Right lobe of liver (tissue), 6 donors: ENCODE measurements at regions of chr11 and their contacts with region 1.

Region 1: DNA sequence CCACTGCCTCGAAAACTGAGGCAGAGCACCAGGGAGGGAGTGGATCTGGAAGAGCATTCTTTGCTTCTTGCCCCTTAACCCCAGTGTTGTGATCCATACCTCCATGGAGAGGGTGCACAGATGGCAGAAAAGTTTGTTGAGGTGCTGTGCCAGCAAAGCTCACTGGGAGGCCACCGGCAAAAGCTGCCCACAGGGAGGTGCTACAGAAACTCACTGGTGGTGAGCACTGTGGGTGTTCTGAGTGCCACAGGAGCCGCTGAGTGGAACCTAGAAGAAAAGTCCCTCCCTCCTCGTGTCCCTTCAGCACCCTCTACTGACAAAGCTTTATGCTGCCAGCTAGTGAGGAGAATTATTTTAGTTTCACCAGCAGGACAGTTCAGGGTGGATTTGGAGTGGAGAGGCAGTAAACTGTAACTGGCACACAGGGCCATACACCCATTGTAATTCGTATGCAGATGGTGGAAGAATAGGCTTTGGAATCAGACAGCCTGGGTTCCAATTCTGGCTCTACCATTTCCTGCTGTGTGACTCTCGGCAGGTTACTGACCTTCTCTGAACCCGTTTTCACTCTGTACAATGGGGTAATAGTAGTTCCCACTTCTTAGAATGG is 84.6 kb downstream of the SWAP70 start:
- DNase-seq: peak in 1 of 3 donors; percentile 56
- ATAC-seq: peak; percentile 96 to 98 (median 97)
- H3K4me3 ChIP-seq: no peak overlapping the region
- H3K27ac ChIP-seq: no peak overlapping the region
- H3K4me1 ChIP-seq: no peaks in the 10 kb centered on the region
- H3K27me3 ChIP-seq: no peaks in the 10 kb centered on the region
- CTCF ChIP-seq: peak; percentile 62 to 77 (median 72)
- POLR2A ChIP-seq: no peak

Region 2: DNA sequence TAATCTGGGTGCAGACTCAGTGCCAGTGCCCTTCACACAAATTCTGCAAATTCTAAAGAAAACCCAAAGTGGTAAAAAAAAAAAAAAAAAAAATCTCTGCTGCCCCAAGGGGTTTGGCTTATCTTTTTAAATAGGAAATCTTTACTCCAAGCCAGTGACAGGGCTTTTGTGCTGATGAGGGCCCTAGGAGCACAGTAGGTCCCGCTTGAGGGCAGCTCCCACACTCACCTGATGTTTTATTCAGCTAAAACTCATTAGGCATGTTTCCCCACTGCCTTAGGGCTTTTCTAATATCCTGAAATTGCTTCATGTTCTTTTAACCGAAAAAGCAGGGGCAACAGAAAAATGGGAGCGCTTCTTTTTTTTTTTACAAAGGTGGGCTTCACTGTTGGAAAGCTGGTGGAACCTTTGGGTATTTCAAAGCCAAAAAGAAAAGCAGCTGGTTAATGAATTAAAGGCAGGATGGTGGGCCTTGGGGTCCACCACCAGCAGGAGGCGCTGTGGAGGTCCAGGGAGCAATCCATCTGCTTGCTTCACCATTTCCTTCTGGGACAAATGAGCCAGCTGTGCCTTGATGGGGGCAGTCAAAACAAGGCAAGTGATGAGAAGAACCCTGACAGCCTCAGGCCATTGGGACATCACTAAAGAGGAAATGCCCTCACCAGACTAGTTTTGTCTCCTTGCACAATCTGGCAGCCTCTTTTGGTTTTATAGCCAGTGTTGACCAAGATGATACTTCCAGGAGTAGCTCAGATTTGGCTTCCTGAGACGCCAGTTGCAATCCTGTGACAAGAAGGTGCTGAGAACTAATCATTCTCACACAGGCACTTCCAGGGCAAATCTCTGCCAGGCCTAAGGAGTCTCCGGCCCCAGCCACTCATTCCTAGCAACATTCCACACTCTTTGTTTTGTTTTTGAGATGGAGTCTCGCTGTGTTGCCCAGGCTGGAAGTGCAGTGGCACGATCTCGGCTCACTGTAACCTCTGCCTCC is 213.4 kb before region 1 on chr11:
- intact Hi-C with region 1: loop called in 1 of 2 experiments (anchors 10 kb)
- DNase-seq: peak; percentile 77 to 82 (median 80)
- ATAC-seq: peak; percentile 90 to 96 (median 94)
- H3K4me3 ChIP-seq: no peak overlapping the region
- H3K27ac ChIP-seq: no peak overlapping the region
- H3K4me1 ChIP-seq: peaks cover 0 to 1% (median 0%) of the 10 kb centered on the region in 4 donors
- H3K27me3 ChIP-seq: no peaks in the 10 kb centered on the region
- CTCF ChIP-seq: peak; percentile 82 to 91 (median 87)
- POLR2A ChIP-seq: no peak

Region 3: GRCh38 chr11:9613118-9613829 is 135.2 kb before region 1 on chr11:
- intact Hi-C with region 1: no loop called
- DNase-seq: peak; percentile 93 to 96 (median 93)
- ATAC-seq: peak; percentile 88 to 94 (median 92)
- H3K4me3 ChIP-seq: peak overlapping the region; percentile 43 to 60 (median 52)
- H3K27ac ChIP-seq: peak overlapping the region; percentile 94 to 100 (median 94)
- H3K4me1 ChIP-seq: peaks cover 0 to 5% (median 2%) of the 10 kb centered on the region in 4 donors
- H3K27me3 ChIP-seq: no peaks in the 10 kb centered on the region
- CTCF ChIP-seq: peak; percentile 96 to 99 (median 98)
- POLR2A ChIP-seq: peak; percentile 86